CD8-positive, alpha-beta T cell (primary cell): ENCODE measurements at regions of chr1 and their contacts with region 1.

Region 1: GRCh38 chr1:66242646-66243547 is 291.1 kb upstream of the SGIP1 start:
- DNase-seq: peak; percentile 44 to 85 (median 73)
- ATAC-seq: peak; percentile 82
- H3K4me3 ChIP-seq: no peak overlapping the region
- H3K4me3 Mint-ChIP-seq: no peak overlapping the region
- H3K27ac ChIP-seq: no peak overlapping the region
- H3K27ac Mint-ChIP-seq: no peak overlapping the region
- H3K4me1 ChIP-seq: peaks cover 12% of the 10 kb centered on the region
- H3K4me1 Mint-ChIP-seq: peaks cover 23% of the 10 kb centered on the region
- H3K27me3 ChIP-seq: no peaks in the 10 kb centered on the region
- H3K27me3 Mint-ChIP-seq: peaks cover 6% of the 10 kb centered on the region
- CTCF ChIP-seq: peak; percentile 97

Region 2: GRCh38 chr1:65419681-65420589 is 823.0 kb before region 1 on chr1:
- CTCF ChIA-PET with region 1: no interaction called
- POLR2A ChIA-PET with region 1: no interaction called
- intact Hi-C with region 1: loop called in 1 of 2 experiments (anchors 2 kb)
- DNase-seq: peak; percentile 97 to 99 (median 98)
- ATAC-seq: peak; percentile 94
- H3K4me3 ChIP-seq: peak overlapping the region; percentile 96 to 98
- H3K4me3 Mint-ChIP-seq: no peak overlapping the region
- H3K27ac ChIP-seq: peak overlapping the region; percentile 69 to 71
- H3K27ac Mint-ChIP-seq: peak overlapping the region; percentile 93
- H3K4me1 ChIP-seq: peaks cover 15% of the 10 kb centered on the region
- H3K4me1 Mint-ChIP-seq: peaks cover 21% of the 10 kb centered on the region
- H3K27me3 ChIP-seq: peaks cover 0 to 3% of the 10 kb centered on the region in 2 experiments
- H3K27me3 Mint-ChIP-seq: no peaks in the 10 kb centered on the region
- CTCF ChIP-seq: no peak

Region 3: DNA sequence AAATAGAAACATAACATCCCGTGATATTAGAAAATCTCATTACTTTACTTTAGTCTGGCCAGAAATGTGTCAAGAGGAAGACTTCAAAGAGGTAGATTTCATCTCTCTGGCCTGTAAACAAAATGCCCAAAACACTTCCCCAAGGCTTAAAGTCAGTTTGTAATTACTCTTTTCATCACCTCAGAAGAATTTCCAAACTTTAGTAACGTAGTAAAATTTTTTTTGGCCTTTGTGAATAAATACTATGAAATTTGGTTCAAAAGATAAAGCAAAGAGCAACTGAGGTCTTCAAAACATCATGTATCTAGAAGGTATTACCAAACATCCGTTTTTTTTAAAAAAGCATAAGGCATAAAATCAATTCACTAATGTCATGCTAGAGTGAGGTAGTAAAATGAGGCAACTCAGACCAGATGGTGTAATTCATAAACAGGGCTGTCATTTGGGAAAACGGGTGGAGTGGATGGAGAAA is 771.0 kb before region 1 on chr1:
- CTCF ChIA-PET with region 1: no interaction called
- POLR2A ChIA-PET with region 1: no interaction called
- intact Hi-C with region 1: no loop called
- DNase-seq: no peak
- ATAC-seq: no peak
- H3K4me3 ChIP-seq: no peak overlapping the region
- H3K4me3 Mint-ChIP-seq: no peak overlapping the region
- H3K27ac ChIP-seq: no peak overlapping the region
- H3K27ac Mint-ChIP-seq: no peak overlapping the region
- H3K4me1 ChIP-seq: no peaks in the 10 kb centered on the region
- H3K4me1 Mint-ChIP-seq: no peaks in the 10 kb centered on the region
- H3K27me3 ChIP-seq: no peaks in the 10 kb centered on the region
- H3K27me3 Mint-ChIP-seq: no peaks in the 10 kb centered on the region
- CTCF ChIP-seq: no peak

Region 4: DNA sequence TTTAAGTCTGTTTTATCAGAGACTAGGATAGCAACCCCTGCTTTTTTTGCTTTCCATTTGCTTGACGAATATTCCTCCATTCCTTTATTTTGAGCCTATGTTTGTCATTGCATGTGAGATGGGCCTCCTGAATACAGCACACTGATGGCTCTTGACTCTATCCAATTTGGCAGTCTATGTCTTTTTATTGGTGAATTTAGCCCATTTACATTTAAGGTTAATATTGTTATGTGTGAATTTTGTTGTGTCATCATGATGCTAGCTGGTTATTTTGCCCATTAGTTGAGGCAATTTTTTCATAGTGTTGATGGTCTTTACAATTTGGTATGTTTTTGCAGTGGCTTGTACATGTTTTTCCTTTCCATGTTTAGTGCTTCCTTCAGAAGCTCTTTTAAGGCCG is 500.9 kb before region 1 on chr1:
- CTCF ChIA-PET with region 1: no interaction called
- POLR2A ChIA-PET with region 1: no interaction called
- intact Hi-C with region 1: no loop called
- DNase-seq: no peak
- ATAC-seq: no peak
- H3K4me3 ChIP-seq: no peak overlapping the region
- H3K4me3 Mint-ChIP-seq: no peak overlapping the region
- H3K27ac ChIP-seq: no peak overlapping the region
- H3K27ac Mint-ChIP-seq: no peak overlapping the region
- H3K4me1 ChIP-seq: no peaks in the 10 kb centered on the region
- H3K4me1 Mint-ChIP-seq: no peaks in the 10 kb centered on the region
- H3K27me3 ChIP-seq: no peaks in the 10 kb centered on the region
- H3K27me3 Mint-ChIP-seq: peaks cover 18% of the 10 kb centered on the region
- CTCF ChIP-seq: no peak

Region 5: DNA sequence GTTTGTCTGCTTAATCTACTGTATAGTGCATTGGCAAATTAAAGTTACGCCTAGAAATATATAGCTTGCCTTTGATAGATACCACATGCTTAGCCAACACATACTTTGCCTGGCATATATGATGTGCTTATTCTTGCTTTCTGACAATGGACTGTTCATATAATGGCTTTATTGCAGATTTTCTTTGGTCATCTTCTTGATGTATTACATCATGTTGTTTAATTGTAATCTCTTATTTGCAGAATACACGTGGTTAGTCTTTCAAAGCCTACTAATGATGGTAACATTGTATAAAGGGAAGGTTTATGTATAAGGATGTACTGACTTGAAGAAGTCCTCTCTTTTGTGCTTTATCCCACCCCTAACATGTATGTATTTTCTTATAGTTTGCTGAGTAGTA is 248.7 kb before region 1 on chr1:
- CTCF ChIA-PET with region 1: no interaction called
- POLR2A ChIA-PET with region 1: no interaction called
- intact Hi-C with region 1: no loop called
- DNase-seq: no peak
- ATAC-seq: no peak
- H3K4me3 ChIP-seq: no peak overlapping the region
- H3K4me3 Mint-ChIP-seq: no peak overlapping the region
- H3K27ac ChIP-seq: no peak overlapping the region
- H3K27ac Mint-ChIP-seq: no peak overlapping the region
- H3K4me1 ChIP-seq: no peaks in the 10 kb centered on the region
- H3K4me1 Mint-ChIP-seq: no peaks in the 10 kb centered on the region
- H3K27me3 ChIP-seq: no peaks in the 10 kb centered on the region
- H3K27me3 Mint-ChIP-seq: peaks cover 7% of the 10 kb centered on the region
- CTCF ChIP-seq: no peak

Region 6: GRCh38 chr1:66084442-66084841 is 158.5 kb before region 1 on chr1:
- CTCF ChIA-PET with region 1: interaction called, 3 read pairs
- POLR2A ChIA-PET with region 1: no interaction called
- intact Hi-C with region 1: loop called in 1 of 2 experiments (anchors 10 kb)
- DNase-seq: peak in 1 of 9 experiments; percentile 1
- ATAC-seq: no peak
- H3K4me3 ChIP-seq: no peak overlapping the region
- H3K4me3 Mint-ChIP-seq: no peak overlapping the region
- H3K27ac ChIP-seq: no peak overlapping the region
- H3K27ac Mint-ChIP-seq: no peak overlapping the region
- H3K4me1 ChIP-seq: no peaks in the 10 kb centered on the region
- H3K4me1 Mint-ChIP-seq: no peaks in the 10 kb centered on the region
- H3K27me3 ChIP-seq: no peaks in the 10 kb centered on the region
- H3K27me3 Mint-ChIP-seq: peaks cover 10% of the 10 kb centered on the region
- CTCF ChIP-seq: no peak

Region 7: GRCh38 chr1:66223681-66224080 is 19.2 kb before region 1 on chr1:
- CTCF ChIA-PET with region 1: interaction called, 18 read pairs
- POLR2A ChIA-PET with region 1: interaction called, 3 read pairs
- intact Hi-C with region 1: no loop called
- DNase-seq: no peak
- ATAC-seq: no peak
- H3K4me3 ChIP-seq: no peak overlapping the region
- H3K4me3 Mint-ChIP-seq: no peak overlapping the region
- H3K27ac ChIP-seq: no peak overlapping the region
- H3K27ac Mint-ChIP-seq: no peak overlapping the region
- H3K4me1 ChIP-seq: no peaks in the 10 kb centered on the region
- H3K4me1 Mint-ChIP-seq: no peaks in the 10 kb centered on the region
- H3K27me3 ChIP-seq: no peaks in the 10 kb centered on the region
- H3K27me3 Mint-ChIP-seq: peaks cover 4% of the 10 kb centered on the region
- CTCF ChIP-seq: no peak

Region 8: DNA sequence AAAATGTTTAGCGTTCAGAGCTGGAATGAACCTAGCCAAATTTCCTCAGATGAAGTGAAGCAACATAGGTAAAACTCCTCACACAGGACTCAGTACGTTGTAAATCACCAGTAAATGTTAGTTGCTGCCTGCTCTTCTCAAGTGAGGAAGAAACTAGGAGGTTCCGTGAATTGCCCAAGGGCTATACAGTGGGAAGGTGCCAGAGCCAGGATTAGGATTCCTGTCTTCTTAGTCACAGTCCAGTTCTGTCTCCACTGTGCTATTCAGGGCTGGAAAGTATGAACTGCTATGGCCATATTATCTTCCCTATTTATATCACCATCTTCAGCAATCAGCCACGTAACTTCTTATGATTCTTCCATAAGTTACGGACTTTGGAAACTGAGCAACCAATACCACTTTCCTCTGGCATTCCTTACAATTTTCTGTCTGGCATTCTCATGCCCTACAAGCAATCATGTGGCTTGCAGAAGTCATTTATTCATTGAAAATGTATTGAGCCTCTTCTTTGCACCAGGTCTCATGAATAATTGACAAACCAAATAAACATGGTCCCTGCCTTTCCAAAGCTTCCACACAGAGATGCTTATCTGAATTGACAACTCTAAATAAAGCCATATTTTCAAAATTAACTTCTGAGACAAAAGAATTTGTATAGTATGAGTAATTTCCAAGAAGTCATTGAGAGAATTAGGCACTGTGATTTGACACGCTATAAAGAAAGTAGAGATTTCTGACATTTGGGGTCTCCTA is 19.5 kb after region 1 on chr1:
- CTCF ChIA-PET with region 1: interaction called, 15 read pairs
- POLR2A ChIA-PET with region 1: no interaction called
- intact Hi-C with region 1: no loop called
- DNase-seq: no peak
- ATAC-seq: no peak
- H3K4me3 ChIP-seq: no peak overlapping the region
- H3K4me3 Mint-ChIP-seq: no peak overlapping the region
- H3K27ac ChIP-seq: no peak overlapping the region
- H3K27ac Mint-ChIP-seq: no peak overlapping the region
- H3K4me1 ChIP-seq: peaks cover 12% of the 10 kb centered on the region
- H3K4me1 Mint-ChIP-seq: peaks cover 21% of the 10 kb centered on the region
- H3K27me3 ChIP-seq: no peaks in the 10 kb centered on the region
- H3K27me3 Mint-ChIP-seq: no peaks in the 10 kb centered on the region
- CTCF ChIP-seq: no peak

Region 9: GRCh38 chr1:66282343-66282852 is 39.5 kb after region 1 on chr1:
- CTCF ChIA-PET with region 1: no interaction called
- POLR2A ChIA-PET with region 1: no interaction called
- intact Hi-C with region 1: no loop called
- DNase-seq: peak in 7 of 9 experiments; percentile 16 to 89 (median 54)
- ATAC-seq: peak; percentile 93
- H3K4me3 ChIP-seq: no peak overlapping the region
- H3K4me3 Mint-ChIP-seq: no peak overlapping the region
- H3K27ac ChIP-seq: peak overlapping the region in 1 of 2 experiments; percentile 13
- H3K27ac Mint-ChIP-seq: peak overlapping the region; percentile 84
- H3K4me1 ChIP-seq: peaks cover 55% of the 10 kb centered on the region
- H3K4me1 Mint-ChIP-seq: peaks cover 89% of the 10 kb centered on the region
- H3K27me3 ChIP-seq: no peaks in the 10 kb centered on the region
- H3K27me3 Mint-ChIP-seq: no peaks in the 10 kb centered on the region
- CTCF ChIP-seq: peak; percentile 35

Region 10: GRCh38 chr1:66436378-66437145 is 193.7 kb after region 1 on chr1:
- CTCF ChIA-PET with region 1: interaction called, 677 read pairs
- POLR2A ChIA-PET with region 1: no interaction called
- intact Hi-C with region 1: no loop called
- DNase-seq: peak in 4 of 9 experiments; percentile 31 to 58 (median 43)
- ATAC-seq: peak; percentile 87
- H3K4me3 ChIP-seq: no peak overlapping the region
- H3K4me3 Mint-ChIP-seq: no peak overlapping the region
- H3K27ac ChIP-seq: no peak overlapping the region
- H3K27ac Mint-ChIP-seq: no peak overlapping the region
- H3K4me1 ChIP-seq: no peaks in the 10 kb centered on the region
- H3K4me1 Mint-ChIP-seq: peaks cover 8% of the 10 kb centered on the region
- H3K27me3 ChIP-seq: no peaks in the 10 kb centered on the region
- H3K27me3 Mint-ChIP-seq: no peaks in the 10 kb centered on the region
- CTCF ChIP-seq: peak; percentile 22

Region 11: DNA sequence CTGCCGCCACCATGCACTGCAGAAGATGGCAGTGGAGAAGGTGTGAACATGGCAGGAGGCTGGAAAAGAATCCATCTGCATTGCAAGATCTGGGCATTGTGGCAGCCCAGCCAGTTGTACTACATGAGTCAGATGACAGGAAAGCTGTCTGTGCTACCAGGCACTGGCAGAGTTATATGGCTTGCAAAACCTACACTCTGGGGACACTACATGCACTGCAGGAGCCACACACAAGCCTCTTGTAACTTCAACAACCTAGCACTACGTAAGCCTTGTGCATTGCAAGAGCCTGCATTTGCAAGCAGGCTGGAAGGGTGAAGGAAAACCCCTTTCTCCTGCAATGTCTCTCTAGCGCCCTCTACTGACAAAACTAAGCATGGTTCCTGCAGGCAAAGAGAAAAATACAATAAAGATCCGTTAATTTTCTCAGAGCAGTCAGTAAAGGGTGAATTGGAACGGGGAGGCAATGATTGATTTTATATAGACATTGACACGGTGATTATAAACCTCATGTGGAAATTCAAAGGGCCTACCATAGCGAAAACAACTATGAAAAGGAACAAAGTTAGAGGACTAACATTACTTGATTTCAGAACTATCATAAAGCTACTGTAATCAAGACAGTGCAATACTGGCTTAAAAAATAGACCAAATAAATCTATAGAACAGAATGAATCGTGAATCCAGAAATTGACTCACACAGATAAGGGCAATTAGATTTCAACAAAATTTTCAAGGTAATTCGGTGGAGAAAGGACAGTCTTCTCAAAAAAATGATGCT is 483.2 kb after region 1 on chr1:
- CTCF ChIA-PET with region 1: no interaction called
- POLR2A ChIA-PET with region 1: no interaction called
- intact Hi-C with region 1: loop called in 1 of 2 experiments (anchors 5 kb)
- DNase-seq: peak; percentile 4 to 78 (median 42)
- ATAC-seq: peak; percentile 66
- H3K4me3 ChIP-seq: no peak overlapping the region
- H3K4me3 Mint-ChIP-seq: no peak overlapping the region
- H3K27ac ChIP-seq: no peak overlapping the region
- H3K27ac Mint-ChIP-seq: no peak overlapping the region
- H3K4me1 ChIP-seq: no peaks in the 10 kb centered on the region
- H3K4me1 Mint-ChIP-seq: peaks cover 17% of the 10 kb centered on the region
- H3K27me3 ChIP-seq: no peaks in the 10 kb centered on the region
- H3K27me3 Mint-ChIP-seq: peaks cover 20% of the 10 kb centered on the region
- CTCF ChIP-seq: peak; percentile 94